ENCODE measurements at regions of chr15 and their contacts with region 1.

Region 1: GRCh38 chr15:63945007-63945788 is 101.1 kb downstream of the DAPK2 start:
- DNase-seq: peak; percentile 64 to 90
- ATAC-seq: peak; percentile 89 to 97
- H3K4me3 ChIP-seq: no peak overlapping the region
- H3K27ac ChIP-seq: peak overlapping the region in 1 of 2 experiments; percentile 12; a peak in 1 of 6 replicates
- H3K4me1 ChIP-seq: no peaks in the 10 kb centered on the region
- CTCF ChIP-seq: peak; percentile 86
- EP300 ChIP-seq: no peak
- POLR2A ChIP-seq: no peak
- RAD21 ChIP-seq: peak; percentile 62 to 76

Region 2: DNA sequence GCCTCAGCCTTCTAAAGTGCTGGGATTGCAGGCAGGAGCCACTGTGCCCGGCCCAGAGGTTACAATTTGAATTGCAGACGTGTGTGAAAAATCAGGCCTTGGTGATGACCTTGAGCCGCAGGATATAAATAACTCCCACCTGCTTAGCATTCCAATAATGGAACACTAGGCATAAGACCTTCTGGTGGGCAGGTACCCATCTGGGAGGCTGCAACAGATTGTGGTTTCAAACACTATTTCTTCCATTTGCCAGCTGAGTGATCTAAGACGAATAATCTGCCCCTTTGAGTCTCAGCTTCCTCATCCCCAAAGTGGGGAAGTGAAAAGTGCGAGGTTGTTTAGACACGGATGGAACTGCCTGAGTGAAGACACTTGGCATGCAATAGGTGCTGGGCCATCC is 63.8 kb before region 1 on chr15:
- CTCF ChIA-PET with region 1: no interaction called
- POLR2A ChIA-PET with region 1: no interaction called
- DNase-seq: no peak
- ATAC-seq: no peak
- H3K4me3 ChIP-seq: no peak overlapping the region
- H3K27ac ChIP-seq: no peak overlapping the region
- H3K4me1 ChIP-seq: no peaks in the 10 kb centered on the region
- CTCF ChIP-seq: no peak
- EP300 ChIP-seq: no peak
- POLR2A ChIP-seq: no peak
- RAD21 ChIP-seq: no peak

Region 3: DNA sequence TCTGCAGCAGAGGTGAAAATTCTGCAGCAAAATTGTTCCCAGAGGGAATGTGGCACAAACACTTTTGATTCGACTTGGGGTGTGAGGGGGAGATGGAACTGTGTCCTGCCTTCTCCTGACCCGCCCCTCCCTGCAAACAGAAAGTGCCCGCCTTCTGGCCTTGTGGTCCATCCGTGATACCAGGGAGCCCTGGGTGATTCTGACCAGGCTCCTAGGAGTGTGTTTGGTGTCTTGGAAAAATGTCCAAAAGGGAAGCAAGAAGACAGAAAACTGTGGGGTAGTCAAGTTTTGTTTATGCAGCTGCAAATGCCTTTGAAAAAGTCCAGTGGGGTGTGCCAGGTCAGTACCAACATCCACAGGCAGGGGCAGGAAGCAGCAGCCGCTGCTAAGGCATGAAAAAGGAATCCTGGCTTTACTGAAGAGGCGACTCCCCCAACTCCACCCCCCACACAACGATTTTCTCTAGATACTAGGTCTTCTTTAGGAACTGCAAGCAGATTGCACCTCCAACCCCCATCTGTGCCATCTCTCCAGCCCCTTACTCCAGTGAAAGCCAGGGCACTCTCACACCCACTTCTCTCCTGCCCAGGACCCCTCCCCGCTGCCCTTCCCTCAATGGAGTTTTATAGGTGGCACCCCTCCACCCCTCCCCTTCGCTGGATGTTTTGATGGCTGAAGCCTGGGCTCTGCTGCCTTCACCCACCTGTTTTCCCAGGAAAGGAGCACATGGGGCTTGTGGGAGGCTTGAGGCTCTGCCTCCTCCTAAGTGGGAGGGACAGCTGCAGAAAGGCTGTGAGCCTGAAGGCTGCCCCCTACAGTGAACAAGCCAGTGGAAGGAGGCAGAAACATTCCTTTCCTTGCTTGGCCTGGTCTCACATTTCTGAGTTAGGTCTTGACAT is 29.1 kb before region 1 on chr15:
- CTCF ChIA-PET with region 1: interaction called, 41 read pairs
- POLR2A ChIA-PET with region 1: no interaction called
- DNase-seq: peak; percentile 47 to 59
- ATAC-seq: peak; percentile 75 to 86; a peak in 5 of 6 replicates
- H3K4me3 ChIP-seq: no peak overlapping the region
- H3K27ac ChIP-seq: 0 out of 6 replicates have a peak overlapping the region, but pooled peaks of 1 of the 2 experiments have one; percentile 20
- H3K4me1 ChIP-seq: peaks cover 11% of the 10 kb centered on the region; the same call in 2 of the 3 replicates
- CTCF ChIP-seq: no peak
- EP300 ChIP-seq: no peak
- POLR2A ChIP-seq: no peak
- RAD21 ChIP-seq: no peak

Region 4: GRCh38 chr15:63933522-63933921 is 11.7 kb before region 1 on chr15:
- CTCF ChIA-PET with region 1: interaction called, 50 read pairs
- POLR2A ChIA-PET with region 1: no interaction called
- DNase-seq: no peak
- ATAC-seq: no peak; a peak in 1 of 6 replicates
- H3K4me3 ChIP-seq: no peak overlapping the region
- H3K27ac ChIP-seq: no peak overlapping the region
- H3K4me1 ChIP-seq: 0 out of 3 replicates have a peak, but pooled peaks cover 3% of the 10 kb centered on the region
- CTCF ChIP-seq: no peak
- EP300 ChIP-seq: no peak
- POLR2A ChIP-seq: no peak
- RAD21 ChIP-seq: no peak

Region 5: GRCh38 chr15:63996794-63997357 is 51.7 kb after region 1 on chr15:
- CTCF ChIA-PET with region 1: interaction called, 10 read pairs
- POLR2A ChIA-PET with region 1: no interaction called
- DNase-seq: no peak
- ATAC-seq: no peak
- H3K4me3 ChIP-seq: no peak overlapping the region
- H3K27ac ChIP-seq: no peak overlapping the region
- H3K4me1 ChIP-seq: 0 out of 3 replicates have a peak, but pooled peaks cover 3% of the 10 kb centered on the region
- CTCF ChIP-seq: no peak
- EP300 ChIP-seq: no peak
- POLR2A ChIP-seq: no peak
- RAD21 ChIP-seq: no peak